B cell (primary cell): ENCODE measurements at regions of chr4 and their contacts with region 1.

Region 1: GRCh38 chr4:1167247-1167949 is 5.0 kb downstream of the SPON2 start:
- DNase-seq: peak; percentile 94
- ATAC-seq: peak; percentile 84
- H3K4me3 ChIP-seq: peak overlapping the region; percentile 67 to 97 (median 92)
- H3K4me3 Mint-ChIP-seq: peak overlapping the region; percentile 86
- H3K27ac ChIP-seq: peak overlapping the region; percentile 73 to 79
- H3K27ac Mint-ChIP-seq: peak overlapping the region; percentile 79
- H3K4me1 ChIP-seq: peaks cover 50 to 64% of the 10 kb centered on the region in 2 donors
- H3K4me1 Mint-ChIP-seq: peaks cover 54% of the 10 kb centered on the region
- H3K27me3 ChIP-seq: peaks cover 0 to 20% (median 9%) of the 10 kb centered on the region in 4 experiments
- H3K27me3 Mint-ChIP-seq: peaks cover 3% of the 10 kb centered on the region
- CTCF ChIP-seq: peak; percentile 96

Region 2: GRCh38 chr4:600850-601515 is 566.4 kb before region 1 on chr4:
- CTCF ChIA-PET with region 1: no interaction called
- POLR2A ChIA-PET with region 1: no interaction called
- intact Hi-C with region 1: no loop called
- DNase-seq: no peak
- ATAC-seq: no peak
- H3K4me3 ChIP-seq: no peak overlapping the region
- H3K4me3 Mint-ChIP-seq: no peak overlapping the region
- H3K27ac ChIP-seq: no peak overlapping the region
- H3K27ac Mint-ChIP-seq: no peak overlapping the region
- H3K4me1 ChIP-seq: no peaks in the 10 kb centered on the region
- H3K4me1 Mint-ChIP-seq: peaks cover 5% of the 10 kb centered on the region
- H3K27me3 ChIP-seq: peaks cover 0 to 5% (median 3%) of the 10 kb centered on the region in 4 experiments
- H3K27me3 Mint-ChIP-seq: peaks cover 19% of the 10 kb centered on the region
- CTCF ChIP-seq: no peak

Region 3: DNA sequence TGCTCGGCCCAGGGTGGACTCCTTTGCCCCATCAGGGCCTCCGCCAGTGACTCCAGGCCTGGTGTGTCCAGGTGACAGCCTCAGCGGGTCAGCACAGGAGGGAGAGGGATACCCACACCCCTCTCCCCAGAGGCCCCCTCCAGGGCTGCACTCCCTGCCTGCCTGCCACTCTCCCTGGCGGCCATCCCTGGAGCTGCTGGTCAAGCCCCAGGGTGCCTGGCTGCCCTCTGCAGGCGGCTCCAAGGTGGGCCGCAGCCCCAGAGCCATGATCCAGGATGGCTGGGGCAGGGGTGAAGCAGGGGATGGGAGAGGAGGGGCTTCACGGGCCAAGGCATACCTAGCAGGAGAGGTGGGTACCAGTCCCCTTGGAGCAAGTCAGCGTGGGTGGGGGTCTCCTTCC is 152.2 kb before region 1 on chr4:
- CTCF ChIA-PET with region 1: no interaction called
- POLR2A ChIA-PET with region 1: no interaction called
- intact Hi-C with region 1: no loop called
- DNase-seq: no peak
- ATAC-seq: no peak
- H3K4me3 ChIP-seq: no peak overlapping the region
- H3K4me3 Mint-ChIP-seq: no peak overlapping the region
- H3K27ac ChIP-seq: no peak overlapping the region
- H3K27ac Mint-ChIP-seq: no peak overlapping the region
- H3K4me1 ChIP-seq: peaks cover 14 to 23% of the 10 kb centered on the region in 2 donors
- H3K4me1 Mint-ChIP-seq: peaks cover 17% of the 10 kb centered on the region
- H3K27me3 ChIP-seq: peaks cover 0 to 5% (median 1%) of the 10 kb centered on the region in 4 experiments
- H3K27me3 Mint-ChIP-seq: no peaks in the 10 kb centered on the region
- CTCF ChIP-seq: no peak

Region 4: DNA sequence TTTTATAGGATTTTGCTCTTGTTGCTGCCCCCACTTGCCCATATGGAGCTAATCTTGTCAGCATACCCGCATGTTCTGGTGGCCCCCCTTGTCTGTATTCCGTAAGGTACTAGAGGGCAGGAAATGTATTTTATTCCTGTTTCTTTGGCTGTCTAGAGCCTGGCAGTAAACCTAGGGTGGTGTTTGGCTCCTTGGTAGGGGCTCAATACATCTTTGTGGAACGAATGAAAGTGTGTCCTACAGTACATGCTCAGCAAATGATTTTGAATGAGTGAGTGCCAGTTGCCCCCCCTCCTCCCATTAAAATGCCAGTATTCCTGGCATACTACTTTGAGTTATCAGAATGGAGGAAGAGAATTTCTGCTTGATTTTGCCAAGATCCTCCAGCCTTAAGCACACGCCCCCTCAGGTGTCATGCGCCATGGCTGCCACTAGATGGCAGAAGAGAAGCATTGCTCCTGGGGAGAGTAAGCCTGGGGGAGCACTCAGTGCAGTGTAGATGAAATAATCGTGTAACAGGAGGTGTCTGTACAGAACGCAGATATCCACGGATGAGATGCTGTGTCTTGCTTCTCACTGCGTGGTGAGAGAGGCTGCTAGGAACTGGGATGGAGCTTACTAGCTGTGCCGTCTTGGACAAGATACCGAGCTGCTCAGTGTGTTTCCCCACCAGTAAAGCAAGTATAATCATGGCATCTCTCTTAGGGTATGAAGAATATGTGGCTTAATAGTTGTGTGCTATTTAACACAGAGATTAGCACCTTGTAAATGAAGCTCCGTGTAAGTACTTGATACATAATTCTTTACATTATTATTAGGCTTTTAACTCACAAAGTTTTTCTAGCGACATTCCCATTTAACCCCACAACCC is 36.8 kb before region 1 on chr4:
- CTCF ChIA-PET with region 1: interaction called, 22 read pairs
- POLR2A ChIA-PET with region 1: interaction called, 4 read pairs
- intact Hi-C with region 1: loop called (anchors 2 kb)
- DNase-seq: peak; percentile 89
- ATAC-seq: peak; percentile 99
- H3K4me3 ChIP-seq: no peak overlapping the region
- H3K4me3 Mint-ChIP-seq: no peak overlapping the region
- H3K27ac ChIP-seq: no peak overlapping the region
- H3K27ac Mint-ChIP-seq: no peak overlapping the region
- H3K4me1 ChIP-seq: peaks cover 18% of the 10 kb centered on the region in 2 donors
- H3K4me1 Mint-ChIP-seq: peaks cover 22% of the 10 kb centered on the region
- H3K27me3 ChIP-seq: no peaks in the 10 kb centered on the region
- H3K27me3 Mint-ChIP-seq: peaks cover 12% of the 10 kb centered on the region
- CTCF ChIP-seq: peak; percentile 100

Region 5: GRCh38 chr4:1200425-1201035 is 33.1 kb after region 1 on chr4:
- CTCF ChIA-PET with region 1: interaction called, 6 read pairs
- POLR2A ChIA-PET with region 1: interaction called, 3 read pairs
- intact Hi-C with region 1: loop called (anchors 1 kb)
- DNase-seq: peak; percentile 22
- ATAC-seq: no peak
- H3K4me3 ChIP-seq: peak overlapping the region in 4 of 5 experiments; percentile 3 to 47 (median 32)
- H3K4me3 Mint-ChIP-seq: peak overlapping the region; percentile 86
- H3K27ac ChIP-seq: no peak overlapping the region
- H3K27ac Mint-ChIP-seq: no peak overlapping the region
- H3K4me1 ChIP-seq: peaks cover 32 to 51% of the 10 kb centered on the region in 2 donors
- H3K4me1 Mint-ChIP-seq: peaks cover 40% of the 10 kb centered on the region
- H3K27me3 ChIP-seq: peaks cover 0 to 4% (median 0%) of the 10 kb centered on the region in 4 experiments
- H3K27me3 Mint-ChIP-seq: no peaks in the 10 kb centered on the region
- CTCF ChIP-seq: no peak

Region 6: DNA sequence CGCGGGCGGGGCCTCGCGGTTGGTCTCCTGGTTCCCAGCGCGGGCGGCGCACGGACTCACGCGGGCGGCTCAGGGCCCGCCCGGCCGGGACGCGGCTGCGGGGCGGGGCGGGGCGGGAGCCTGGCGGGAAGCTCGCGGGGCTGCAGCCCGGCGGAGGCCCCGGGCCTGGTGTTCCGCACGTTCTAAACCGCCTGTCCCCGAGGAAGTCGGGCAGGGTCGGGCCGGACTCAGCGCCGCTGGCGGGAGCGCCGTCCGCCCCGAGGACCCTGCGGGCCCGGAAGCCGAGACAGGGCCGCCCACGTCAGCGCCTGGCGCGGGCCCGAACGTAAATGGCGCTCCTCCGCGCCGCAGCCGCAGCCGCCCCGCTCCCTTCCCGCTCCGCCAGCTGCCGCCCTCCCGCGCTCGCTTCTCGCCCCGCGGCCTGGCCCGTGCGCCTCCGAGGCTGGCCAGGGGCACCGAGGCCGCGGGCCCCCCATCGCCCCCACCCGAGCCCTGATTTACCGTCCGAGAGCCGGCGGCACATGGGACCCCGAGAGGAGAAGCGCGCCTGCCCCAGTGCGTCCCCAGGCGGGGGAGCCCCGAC is 81.8 kb after region 1 on chr4:
- CTCF ChIA-PET with region 1: interaction called, 8 read pairs
- POLR2A ChIA-PET with region 1: interaction called, 7 read pairs
- intact Hi-C with region 1: loop called (anchors 1 kb)
- DNase-seq: peak; percentile 95
- ATAC-seq: peak; percentile 73
- H3K4me3 ChIP-seq: peak overlapping the region; percentile 23 to 81 (median 62)
- H3K4me3 Mint-ChIP-seq: peak overlapping the region; percentile 92
- H3K27ac ChIP-seq: peak overlapping the region; percentile 84 to 85
- H3K27ac Mint-ChIP-seq: peak overlapping the region; percentile 97
- H3K4me1 ChIP-seq: peaks cover 47 to 57% of the 10 kb centered on the region in 2 donors
- H3K4me1 Mint-ChIP-seq: peaks cover 60% of the 10 kb centered on the region
- H3K27me3 ChIP-seq: no peaks in the 10 kb centered on the region
- H3K27me3 Mint-ChIP-seq: no peaks in the 10 kb centered on the region
- CTCF ChIP-seq: no peak

Region 7: DNA sequence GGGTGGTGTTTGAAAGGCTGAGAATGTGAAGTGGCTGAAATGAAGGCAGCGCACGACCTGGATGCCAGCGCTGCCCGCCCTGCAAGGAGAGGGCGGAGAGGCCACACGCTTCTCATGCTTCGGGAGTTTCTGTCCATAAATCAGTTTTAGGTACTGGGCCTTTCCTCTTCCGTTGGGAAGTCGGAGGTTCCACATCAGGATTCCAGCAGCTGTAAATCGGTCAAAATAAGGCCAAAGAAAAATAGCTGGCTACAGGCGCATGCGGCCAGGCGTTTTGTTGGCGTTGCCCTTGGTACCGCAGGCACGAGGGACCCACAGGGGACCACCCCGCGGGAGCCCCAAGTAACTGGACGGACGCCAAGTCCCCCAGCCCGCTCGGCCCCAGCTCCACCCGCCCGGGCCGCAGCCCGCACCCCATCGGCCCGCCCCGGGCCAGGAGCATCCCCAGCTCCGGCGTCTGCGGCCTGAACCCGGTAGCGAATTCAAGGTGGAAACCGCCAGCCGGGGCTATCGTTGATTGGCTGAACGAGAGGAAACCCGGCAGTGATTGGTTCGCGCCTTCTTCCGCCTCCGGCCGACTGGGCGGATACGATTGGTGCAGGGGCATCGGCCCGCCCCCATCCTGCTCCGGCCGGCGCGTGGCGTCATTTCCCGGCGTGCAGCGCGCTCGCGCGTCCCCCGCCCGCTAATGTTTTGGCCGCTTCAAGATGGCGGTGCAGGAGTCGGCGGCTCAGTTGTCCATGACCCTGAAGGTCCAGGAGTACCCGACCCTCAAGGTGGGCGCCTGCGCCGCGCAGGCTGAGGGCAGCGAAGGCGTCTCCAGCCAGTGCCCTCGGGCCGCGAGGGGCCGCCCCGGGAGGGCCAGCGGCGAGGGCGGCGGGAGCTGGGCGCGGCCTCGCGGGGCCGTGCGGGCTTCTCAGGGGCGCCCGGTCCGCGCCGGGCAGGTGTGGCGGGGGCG is 122.1 kb after region 1 on chr4 and contains the start of gene MAEA:
- CTCF ChIA-PET with region 1: interaction called, 5 read pairs
- POLR2A ChIA-PET with region 1: no interaction called
- intact Hi-C with region 1: loop called (anchors 1 kb)
- DNase-seq: peak; percentile 97
- ATAC-seq: peak; percentile 97
- H3K4me3 ChIP-seq: peak within 1 kb of the TSS; percentile 66 to 83 (median 79)
- H3K4me3 Mint-ChIP-seq: peak within 1 kb of the TSS; percentile 94
- H3K27ac ChIP-seq: peak within 1 kb of the TSS; percentile 65 to 88
- H3K27ac Mint-ChIP-seq: peak within 1 kb of the TSS; percentile 86
- H3K4me1 ChIP-seq: peaks cover 34 to 43% of the 10 kb centered on the region in 2 donors
- H3K4me1 Mint-ChIP-seq: peaks cover 38% of the 10 kb centered on the region
- H3K27me3 ChIP-seq: no peaks in the 10 kb centered on the region
- H3K27me3 Mint-ChIP-seq: no peaks in the 10 kb centered on the region
- CTCF ChIP-seq: no peak
- total RNA-seq, gene MAEA: 103 and 106 TPM in 2 replicates

Region 8: DNA sequence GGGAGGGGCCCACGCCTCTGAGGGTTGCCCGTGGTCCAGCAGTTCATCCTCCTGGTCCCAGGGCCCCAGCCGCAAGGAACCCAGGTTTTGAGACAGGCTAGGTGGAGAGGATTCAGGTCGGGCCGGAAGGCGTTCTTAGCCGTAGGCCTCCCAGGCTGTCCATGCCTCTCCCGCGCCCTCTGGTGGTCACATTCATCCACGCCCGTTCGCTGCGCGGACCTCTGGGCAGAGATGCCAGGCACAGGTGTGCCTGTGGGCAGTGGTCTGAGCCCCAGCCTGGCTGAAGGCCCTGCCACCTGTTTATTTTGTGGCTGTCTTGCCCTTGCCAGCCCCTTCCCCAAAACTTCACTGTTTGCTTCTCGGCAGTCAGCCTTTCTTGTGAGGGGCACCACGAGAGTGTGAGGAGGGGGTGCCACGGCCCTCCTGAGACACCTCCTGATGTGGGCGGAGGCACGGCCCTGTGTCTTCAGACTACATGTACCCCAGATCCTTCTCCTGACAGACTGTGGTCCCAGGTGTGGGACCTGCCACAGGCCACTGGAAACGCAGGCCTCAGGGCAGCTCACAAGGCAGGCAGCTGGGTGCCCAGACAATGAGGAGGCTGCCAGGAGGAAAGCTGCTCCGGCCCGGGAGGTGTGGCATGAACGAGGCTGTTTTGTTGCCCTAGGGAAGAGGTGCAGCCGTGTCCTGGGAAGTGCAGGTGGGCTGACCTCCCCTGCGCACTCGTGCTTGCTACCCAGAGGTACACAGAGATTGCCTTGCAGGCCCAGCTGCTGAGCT is 184.6 kb after region 1 on chr4:
- CTCF ChIA-PET with region 1: interaction called, 4 read pairs
- POLR2A ChIA-PET with region 1: no interaction called
- intact Hi-C with region 1: loop called (anchors 1 kb)
- DNase-seq: peak; percentile 90
- ATAC-seq: peak; percentile 26
- H3K4me3 ChIP-seq: no peak overlapping the region
- H3K4me3 Mint-ChIP-seq: no peak overlapping the region
- H3K27ac ChIP-seq: no peak overlapping the region
- H3K27ac Mint-ChIP-seq: peak overlapping the region; percentile 67
- H3K4me1 ChIP-seq: peaks cover 10 to 20% of the 10 kb centered on the region in 2 donors
- H3K4me1 Mint-ChIP-seq: peaks cover 25% of the 10 kb centered on the region
- H3K27me3 ChIP-seq: no peaks in the 10 kb centered on the region
- H3K27me3 Mint-ChIP-seq: no peaks in the 10 kb centered on the region
- CTCF ChIP-seq: peak; percentile 90